ENCODE measurements at regions of chr19 and their contacts with region 1.

Region 1: GRCh38 chr19:6424939-6425731 is 524 bp upstream of the KHSRP start:
- DNase-seq: peak; percentile 100
- H3K4me3 ChIP-seq: no peak overlapping the region
- H3K27ac ChIP-seq: peak overlapping the region; percentile 6 to 74 (median 66)
- H3K4me1 ChIP-seq: peaks cover 12 to 24% of the 10 kb centered on the region in 2 donors
- H3K27me3 ChIP-seq: no peaks in the 10 kb centered on the region
- CTCF ChIP-seq: no peak
- POLR2A ChIP-seq: peak in 1 of 2 donors; percentile 40

Region 2: GRCh38 chr19:6223488-6224301 is 201.4 kb before region 1 on chr19:
- intact Hi-C with region 1: no loop called
- DNase-seq: peak; percentile 86 to 94
- H3K4me3 ChIP-seq: no peak overlapping the region
- H3K27ac ChIP-seq: peak overlapping the region in 2 of 3 donors; percentile 12 to 65
- H3K4me1 ChIP-seq: peaks cover 29 to 41% of the 10 kb centered on the region in 2 donors
- H3K27me3 ChIP-seq: no peaks in the 10 kb centered on the region
- CTCF ChIP-seq: peak in 4 of 6 experiments; percentile 16 to 51 (median 42)
- POLR2A ChIP-seq: no peak

Region 3: DNA sequence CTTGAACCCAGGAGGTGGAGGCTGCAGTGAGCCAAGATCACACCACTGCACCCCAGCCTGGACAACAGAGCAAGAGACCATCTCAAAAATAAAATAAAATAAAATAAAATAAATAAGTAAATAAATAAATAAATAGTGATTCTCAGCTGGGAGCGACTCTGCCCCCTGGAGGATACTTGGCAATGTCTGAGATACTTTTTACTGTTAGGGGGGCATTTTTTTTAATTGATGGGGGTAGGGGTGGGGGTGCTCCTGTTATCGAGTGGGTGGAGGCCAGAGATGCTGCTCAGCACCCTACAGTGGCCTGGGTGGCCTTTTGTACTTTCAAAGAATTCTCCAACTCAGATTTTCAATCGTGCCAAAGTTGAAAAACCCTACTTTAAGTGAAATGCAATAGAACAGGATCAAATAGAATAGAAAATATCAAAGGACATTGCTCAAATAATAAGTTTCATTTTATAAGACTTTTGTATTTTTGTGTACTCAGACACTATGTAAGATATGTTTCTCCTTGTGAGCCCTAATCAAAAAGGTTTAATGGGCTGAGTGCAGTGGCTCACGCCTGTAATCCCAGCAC is 70.9 kb before region 1 on chr19:
- intact Hi-C with region 1: no loop called
- DNase-seq: no peak
- H3K4me3 ChIP-seq: no peak overlapping the region
- H3K27ac ChIP-seq: no peak overlapping the region
- H3K4me1 ChIP-seq: no peaks in the 10 kb centered on the region
- H3K27me3 ChIP-seq: no peaks in the 10 kb centered on the region
- CTCF ChIP-seq: peak in 2 of 6 experiments; percentile 34 to 55
- POLR2A ChIP-seq: no peak

Region 4: DNA sequence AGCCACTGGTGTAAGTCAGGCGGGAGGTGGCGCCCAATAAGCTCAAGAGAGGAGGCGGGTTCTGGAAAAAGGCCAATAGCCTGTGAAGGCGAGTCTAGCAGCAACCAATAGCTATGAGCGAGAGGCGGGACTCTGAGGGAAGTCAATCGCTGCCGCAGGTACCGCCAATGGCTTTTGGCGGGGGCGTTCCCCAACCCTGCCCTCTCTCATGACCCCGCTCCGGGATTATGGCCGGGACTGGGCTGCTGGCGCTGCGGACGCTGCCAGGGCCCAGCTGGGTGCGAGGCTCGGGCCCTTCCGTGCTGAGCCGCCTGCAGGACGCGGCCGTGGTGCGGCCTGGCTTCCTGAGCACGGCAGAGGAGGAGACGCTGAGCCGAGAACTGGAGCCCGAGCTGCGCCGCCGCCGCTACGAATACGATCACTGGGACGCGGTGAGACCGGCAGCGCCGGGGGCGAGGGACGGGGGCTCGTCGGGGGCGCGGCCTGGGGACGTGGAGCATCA is 52.5 kb before region 1 on chr19 and contains the start of gene ALKBH7:
- intact Hi-C with region 1: loop called (anchors 10 kb)
- DNase-seq: peak; percentile 100
- H3K4me3 ChIP-seq: peak within 1 kb of the TSS; percentile 95 to 96 (median 95)
- H3K27ac ChIP-seq: peak within 1 kb of the TSS; percentile 93 to 99 (median 98)
- H3K4me1 ChIP-seq: peaks cover 11 to 18% of the 10 kb centered on the region in 2 donors
- H3K27me3 ChIP-seq: no peaks in the 10 kb centered on the region
- CTCF ChIP-seq: no peak
- POLR2A ChIP-seq: peak in 1 of 2 donors; percentile 84
- total RNA-seq, gene ALKBH7: 71.8 to 146 (median 91.4) TPM

Measured in thyroid gland (tissue), 4 donors.